HCT116 (cell line): ENCODE measurements at regions of chr2 and their contacts with region 1.

Region 1: DNA sequence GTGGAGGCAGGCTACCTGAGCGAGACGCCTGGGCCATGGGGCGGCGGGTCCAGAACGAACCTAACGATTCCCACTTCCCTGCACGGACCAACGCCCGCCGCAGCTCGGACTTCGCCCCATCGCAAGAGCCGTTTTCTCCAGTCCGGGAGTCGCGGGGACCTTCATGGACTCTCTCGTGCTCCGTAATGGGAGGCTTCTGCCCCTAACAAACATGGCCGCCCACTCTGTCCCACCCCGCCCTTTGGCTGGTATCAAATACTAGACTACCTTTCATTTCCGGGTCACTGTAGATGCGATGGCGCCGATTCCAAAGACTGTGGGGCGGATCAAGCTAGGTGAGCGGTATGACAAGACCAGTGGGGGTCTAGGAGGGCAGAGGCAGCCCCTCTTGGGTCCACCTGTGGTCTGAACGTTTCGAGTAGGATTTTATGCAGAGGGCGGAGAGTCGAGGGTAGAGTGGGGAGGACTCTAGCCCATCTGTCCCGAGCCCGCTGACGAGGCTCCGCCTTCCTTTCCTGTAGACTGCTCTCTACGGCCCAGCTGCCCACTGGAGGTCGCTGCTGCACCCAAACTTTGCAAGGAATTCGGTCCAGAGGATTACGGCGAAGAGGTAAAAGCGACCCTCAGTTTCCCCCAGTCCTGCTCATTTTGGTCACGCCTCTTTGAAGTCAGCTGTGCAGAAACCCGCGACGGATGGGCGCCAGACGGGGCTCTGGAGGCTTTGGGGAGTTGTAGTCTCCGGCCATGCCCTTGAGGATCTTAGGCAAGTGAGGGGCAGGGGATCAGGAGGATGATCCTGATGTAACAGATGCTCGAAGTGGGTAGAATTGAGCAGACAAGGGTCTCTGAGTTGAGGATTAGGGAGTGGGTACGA is at the starts of genes CCDC142 and TTC31:
- DNase-seq: peak; percentile 91
- ATAC-seq: peak; percentile 92
- H3K4me3 ChIP-seq: peak within 1 kb of the TSS; percentile 61 to 95
- H3K27ac ChIP-seq: peak within 1 kb of the TSS; percentile 90
- H3K4me1 ChIP-seq: peaks cover 12 to 20% of the 10 kb centered on the region in 2 experiments
- H3K27me3 ChIP-seq: no peaks in the 10 kb centered on the region
- CTCF ChIP-seq: peak; percentile 86 to 91 (median 91)
- POLR2A ChIP-seq: peak; percentile 58
- RAD21 ChIP-seq: peak; percentile 84
- total RNA-seq, gene CCDC142: 15.0 TPM
- total RNA-seq, gene TTC31: 26.4 TPM

Region 2: GRCh38 chr2:74168739-74169138 is 314.3 kb before region 1 on chr2:
- CTCF ChIA-PET with region 1: no interaction called
- POLR2A ChIA-PET with region 1: no interaction called
- RAD21 ChIA-PET with region 1: no interaction called
- intact Hi-C with region 1: no loop called
- DNase-seq: no peak
- ATAC-seq: no peak
- H3K4me3 ChIP-seq: no peak overlapping the region
- H3K27ac ChIP-seq: no peak overlapping the region
- H3K4me1 ChIP-seq: no peaks in the 10 kb centered on the region
- H3K27me3 ChIP-seq: no peaks in the 10 kb centered on the region
- CTCF ChIP-seq: no peak
- POLR2A ChIP-seq: no peak
- RAD21 ChIP-seq: no peak

Region 3: GRCh38 chr2:74458132-74458925 is 24.7 kb before region 1 on chr2 and contains the start of gene WBP1:
- CTCF ChIA-PET with region 1: interaction called, 10 read pairs
- POLR2A ChIA-PET with region 1: interaction called, 3 read pairs
- RAD21 ChIA-PET with region 1: no interaction called
- intact Hi-C with region 1: loop called (anchors 1 kb)
- DNase-seq: peak; percentile 100
- ATAC-seq: peak; percentile 87
- H3K4me3 ChIP-seq: peak within 1 kb of the TSS; percentile 70 to 98
- H3K27ac ChIP-seq: peak within 1 kb of the TSS; percentile 89
- H3K4me1 ChIP-seq: peaks cover 12 to 42% of the 10 kb centered on the region in 2 experiments
- H3K27me3 ChIP-seq: no peaks in the 10 kb centered on the region
- CTCF ChIP-seq: no peak
- POLR2A ChIP-seq: peak; percentile 6
- RAD21 ChIP-seq: no peak
- total RNA-seq, gene WBP1: 64.7 TPM

Region 4: GRCh38 chr2:74472086-74472944 is 10.7 kb before region 1 on chr2 and contains the start of gene MRPL53:
- CTCF ChIA-PET with region 1: interaction called, 11 read pairs
- POLR2A ChIA-PET with region 1: interaction called, 25 read pairs
- RAD21 ChIA-PET with region 1: no interaction called
- intact Hi-C with region 1: no loop called
- DNase-seq: peak; percentile 89
- ATAC-seq: peak; percentile 86
- H3K4me3 ChIP-seq: peak within 1 kb of the TSS; percentile 94 to 96
- H3K27ac ChIP-seq: peak within 1 kb of the TSS; percentile 82
- H3K4me1 ChIP-seq: peaks cover 12 to 18% of the 10 kb centered on the region in 2 experiments; a peak in 3 of 4 replicates
- H3K27me3 ChIP-seq: no peaks in the 10 kb centered on the region
- CTCF ChIP-seq: no peak
- POLR2A ChIP-seq: peak; percentile 93
- RAD21 ChIP-seq: no peak
- total RNA-seq, gene MRPL53: 65.4 TPM

Region 5: DNA sequence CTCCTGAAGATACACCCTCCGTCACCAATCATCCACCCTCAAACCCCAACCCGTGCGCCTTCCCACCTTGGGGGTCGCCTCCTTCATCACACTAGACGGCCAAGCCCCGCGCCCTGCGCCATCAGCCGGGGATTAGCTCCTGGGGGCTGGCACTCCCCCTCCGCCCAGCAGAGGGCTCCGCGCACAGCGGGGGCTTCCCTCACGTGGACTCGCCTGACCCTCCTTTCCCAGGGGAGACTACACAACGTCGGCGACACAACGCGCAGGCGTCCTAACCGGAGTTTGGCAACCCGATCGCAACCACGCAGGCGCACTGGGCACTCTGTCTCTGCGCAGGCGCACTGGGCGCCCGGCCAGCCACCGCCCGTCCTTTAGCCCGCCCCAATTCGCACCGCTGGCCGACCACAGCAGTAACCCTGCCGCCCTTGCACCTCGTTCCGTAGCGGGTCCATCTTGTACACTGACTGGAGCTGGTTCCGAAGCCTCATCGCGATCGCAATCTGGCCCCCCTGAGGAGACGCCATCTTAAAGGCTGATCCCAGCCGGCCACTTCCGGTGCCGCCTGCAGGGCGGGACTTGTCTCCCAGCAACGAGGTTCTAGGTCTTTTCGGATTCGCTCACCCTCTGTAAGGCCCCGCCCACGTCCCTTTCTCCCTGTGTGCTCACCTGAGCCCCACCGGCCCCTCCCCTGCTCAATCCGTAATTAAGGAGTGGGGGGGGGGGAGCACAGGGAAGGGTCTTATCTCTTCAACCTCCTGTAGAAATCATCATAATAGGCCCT is 24.3 kb after region 1 on chr2 and contains the start of gene PCGF1:
- CTCF ChIA-PET with region 1: interaction called, 9 read pairs
- POLR2A ChIA-PET with region 1: no interaction called
- RAD21 ChIA-PET with region 1: no interaction called
- intact Hi-C with region 1: loop called (anchors 2 kb)
- DNase-seq: peak; percentile 96
- ATAC-seq: peak; percentile 83
- H3K4me3 ChIP-seq: peak within 1 kb of the TSS; percentile 85 to 93
- H3K27ac ChIP-seq: peak within 1 kb of the TSS; percentile 91
- H3K4me1 ChIP-seq: peaks cover 22 to 46% of the 10 kb centered on the region in 2 experiments
- H3K27me3 ChIP-seq: no peaks in the 10 kb centered on the region
- CTCF ChIP-seq: peak in 2 of 3 experiments; percentile 25 to 32; a peak in 1 of 6 replicates
- POLR2A ChIP-seq: peak; percentile 46
- RAD21 ChIP-seq: no peak
- total RNA-seq, gene PCGF1: 39.9 TPM

Region 6: GRCh38 chr2:74529357-74530238 is 46.6 kb after region 1 on chr2 and contains the starts of genes AUP1 and HTRA2:
- CTCF ChIA-PET with region 1: interaction called, 12 read pairs
- POLR2A ChIA-PET with region 1: no interaction called
- RAD21 ChIA-PET with region 1: interaction called in 1 of 2 experiments, 3 read pairs
- intact Hi-C with region 1: loop called (anchors 1 kb)
- DNase-seq: peak; percentile 98
- ATAC-seq: peak; percentile 92
- H3K4me3 ChIP-seq: peak within 1 kb of the TSS; percentile 98 to 100
- H3K27ac ChIP-seq: peak within 1 kb of the TSS; percentile 94
- H3K4me1 ChIP-seq: peaks cover 14 to 30% of the 10 kb centered on the region in 2 experiments
- H3K27me3 ChIP-seq: no peaks in the 10 kb centered on the region
- CTCF ChIP-seq: no peak
- POLR2A ChIP-seq: peak; percentile 66
- RAD21 ChIP-seq: no peak
- total RNA-seq, gene AUP1: 116 TPM
- total RNA-seq, gene HTRA2: 36.2 TPM

Region 7: GRCh38 chr2:74544634-74545033 is 61.6 kb after region 1 on chr2:
- CTCF ChIA-PET with region 1: interaction called, 5 read pairs
- POLR2A ChIA-PET with region 1: no interaction called
- RAD21 ChIA-PET with region 1: no interaction called
- intact Hi-C with region 1: loop called (anchors 1 kb)
- DNase-seq: no peak
- ATAC-seq: no peak
- H3K4me3 ChIP-seq: no peak overlapping the region
- H3K27ac ChIP-seq: no peak overlapping the region
- H3K4me1 ChIP-seq: peaks cover 4 to 16% of the 10 kb centered on the region in 2 experiments; a peak in 3 of 4 replicates
- H3K27me3 ChIP-seq: no peaks in the 10 kb centered on the region
- CTCF ChIP-seq: peak in 2 of 3 experiments; percentile 49; a peak in 5 of 6 replicates
- POLR2A ChIP-seq: no peak
- RAD21 ChIP-seq: peak; percentile 68

Region 8: DNA sequence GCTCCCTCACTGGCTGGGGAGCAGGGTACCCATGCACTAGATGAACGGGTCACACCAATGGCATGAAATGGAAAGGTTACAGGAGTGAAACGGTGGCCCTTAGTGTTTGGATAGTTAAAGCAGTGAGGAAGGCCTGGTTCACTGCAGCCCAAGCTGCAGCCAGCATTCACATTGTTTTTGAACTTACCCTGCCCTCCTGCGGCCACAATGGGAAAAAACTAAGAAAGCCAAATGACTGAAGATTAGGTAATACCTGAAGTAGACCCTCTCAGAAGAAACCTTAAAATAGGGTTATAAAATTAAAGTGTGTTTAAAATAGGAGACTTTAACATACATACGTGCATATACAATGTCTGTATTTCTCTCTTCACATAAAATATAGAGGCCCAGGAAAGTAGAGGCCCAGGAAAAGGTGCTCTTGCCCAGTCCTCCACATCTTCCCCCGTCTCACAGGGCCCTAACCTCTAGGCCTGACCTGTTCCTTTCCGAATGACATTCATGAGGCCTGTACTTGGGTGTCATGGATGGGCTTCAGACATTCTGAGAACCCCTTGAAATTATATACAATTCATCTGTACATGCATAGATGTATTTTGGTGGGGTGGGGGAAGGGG is 104.7 kb after region 1 on chr2:
- CTCF ChIA-PET with region 1: no interaction called
- POLR2A ChIA-PET with region 1: no interaction called
- RAD21 ChIA-PET with region 1: interaction called in 1 of 2 experiments, 3 read pairs
- intact Hi-C with region 1: loop called (anchors 1 kb)
- DNase-seq: peak; percentile 8
- ATAC-seq: peak; percentile 72
- H3K4me3 ChIP-seq: no peak overlapping the region
- H3K27ac ChIP-seq: no peak overlapping the region
- H3K4me1 ChIP-seq: peaks cover 12 to 15% of the 10 kb centered on the region in 2 experiments
- H3K27me3 ChIP-seq: no peaks in the 10 kb centered on the region
- CTCF ChIP-seq: peak; percentile 32 to 52 (median 37); a peak in 3 of 6 replicates
- POLR2A ChIP-seq: no peak
- RAD21 ChIP-seq: peak; percentile 65